ENCODE measurements at regions of chr15 and their contacts with region 1.

Region 1: DNA sequence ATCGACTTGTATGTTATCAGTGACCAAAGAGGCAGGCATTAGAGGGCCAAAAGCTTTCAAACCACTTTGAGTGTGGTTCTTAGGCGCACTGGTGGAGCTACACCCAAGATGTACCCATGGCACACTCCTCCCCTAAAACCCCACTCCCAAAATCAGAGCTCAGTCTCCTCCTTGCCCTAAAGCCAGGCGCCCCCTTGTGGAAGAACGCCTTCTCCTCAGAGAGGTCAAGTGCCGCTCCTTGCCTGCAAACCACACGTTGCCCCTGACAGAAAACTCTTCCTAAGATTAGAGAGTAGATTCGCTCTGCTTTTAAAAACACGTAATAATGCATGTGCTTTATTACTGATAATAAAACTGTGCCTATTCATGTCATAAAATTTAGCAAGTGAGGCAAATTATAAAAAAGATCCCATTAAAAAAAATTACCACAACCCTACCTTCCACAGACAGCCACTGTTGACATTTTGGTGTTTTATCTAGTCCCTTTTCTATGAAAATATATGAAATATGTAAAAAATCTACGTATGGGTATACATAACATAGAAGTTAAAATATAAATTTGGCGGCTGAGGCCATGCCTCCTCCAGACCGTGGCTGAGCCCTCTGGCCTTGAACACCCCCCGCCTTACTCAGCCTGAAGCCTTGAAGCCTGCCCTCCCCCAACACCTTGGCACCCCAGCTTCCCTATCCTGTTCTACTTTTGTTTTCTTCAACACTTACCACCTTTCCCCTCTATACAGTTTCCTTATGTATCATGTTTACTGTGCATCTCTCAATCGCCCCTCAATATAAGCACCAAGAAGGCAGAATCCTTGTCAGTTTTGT is 33.5 kb downstream of the BCL2L10 start:
- DNase-seq: no peak
- H3K4me3 ChIP-seq: no peak overlapping the region
- CTCF ChIP-seq: peak; percentile 79

Region 2: GRCh38 chr15:51861557-51862359 is 217.3 kb before region 1 on chr15:
- CTCF ChIA-PET with region 1: no interaction called
- POLR2A ChIA-PET with region 1: no interaction called
- DNase-seq: no peak
- H3K4me3 ChIP-seq: no peak overlapping the region
- CTCF ChIP-seq: no peak

Region 3: GRCh38 chr15:51971375-51972133 is 107.5 kb before region 1 on chr15 and contains the start of gene LEO1:
- CTCF ChIA-PET with region 1: interaction called, 14 read pairs
- POLR2A ChIA-PET with region 1: no interaction called
- DNase-seq: peak; percentile 93
- H3K4me3 ChIP-seq: peak within 1 kb of the TSS; percentile 91
- CTCF ChIP-seq: peak; percentile 55

Region 4: DNA sequence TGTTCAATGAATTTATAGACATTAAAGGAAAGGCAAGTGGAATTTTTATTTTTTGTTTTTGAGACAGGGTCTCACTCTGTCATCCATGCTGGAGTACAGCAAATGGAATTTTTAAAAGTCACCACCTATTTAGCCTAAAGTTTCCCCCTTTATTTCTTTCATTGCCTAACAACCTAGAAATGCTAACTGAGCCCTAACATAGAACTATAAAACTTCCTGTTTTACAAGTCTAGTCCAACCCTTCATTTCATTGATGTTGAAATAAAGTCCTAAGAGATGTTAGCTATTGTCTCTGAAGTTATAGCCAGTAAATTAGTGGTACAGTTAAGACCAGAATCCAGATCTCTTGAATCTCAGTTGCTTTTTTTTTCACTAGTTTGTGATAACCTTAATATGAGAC is 21.1 kb before region 1 on chr15:
- CTCF ChIA-PET with region 1: interaction called, 48 read pairs
- POLR2A ChIA-PET with region 1: no interaction called
- DNase-seq: no peak
- H3K4me3 ChIP-seq: no peak overlapping the region
- CTCF ChIP-seq: no peak

Region 5: DNA sequence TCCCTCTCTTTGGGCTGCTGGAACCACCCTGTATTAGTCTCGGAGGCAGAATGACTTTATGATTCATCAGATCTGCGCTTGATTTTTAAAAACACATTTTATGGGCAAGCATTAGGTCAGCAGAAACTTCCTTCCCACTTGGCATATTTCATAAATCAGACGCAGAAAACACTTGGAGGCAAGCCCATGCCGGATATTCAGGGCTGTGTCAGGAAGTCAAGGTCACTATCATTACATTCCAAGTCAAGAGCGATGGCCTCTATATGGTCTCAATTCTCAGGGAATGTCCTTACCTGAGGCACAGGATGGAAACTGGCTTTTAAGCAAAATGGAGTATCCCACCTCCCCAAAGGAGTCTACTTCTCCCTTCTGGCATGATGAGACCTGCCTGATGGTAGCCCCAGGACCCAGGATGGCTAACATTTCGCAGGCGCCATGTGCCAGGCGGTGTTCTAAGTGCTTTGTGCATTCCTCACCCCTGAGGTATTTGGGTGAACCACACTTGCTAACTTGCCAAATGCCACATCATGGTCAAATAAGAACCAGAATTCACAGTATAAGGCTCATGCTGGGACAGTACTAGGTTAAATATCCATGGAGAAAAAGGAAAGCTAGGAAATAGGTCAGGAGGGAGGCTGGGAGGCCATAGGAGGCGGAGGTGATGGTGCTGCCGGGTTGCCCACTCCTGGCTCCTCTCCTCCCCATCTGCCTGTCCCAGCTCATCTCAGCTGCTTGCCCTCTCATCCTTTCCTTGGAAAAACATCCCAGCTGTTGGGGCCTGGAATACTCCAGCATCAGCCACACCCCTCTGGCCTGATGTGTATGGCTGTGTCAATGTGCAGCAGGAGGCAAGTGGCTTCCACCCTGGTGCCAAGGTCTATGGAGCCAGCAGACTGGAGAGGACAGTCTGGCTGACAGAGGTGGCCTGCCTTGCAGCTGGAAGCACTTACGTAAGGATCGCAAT is 14.7 kb after region 1 on chr15:
- CTCF ChIA-PET with region 1: interaction called, 40 read pairs
- POLR2A ChIA-PET with region 1: interaction called, 3 read pairs
- DNase-seq: peak; percentile 76
- H3K4me3 ChIP-seq: no peak overlapping the region
- CTCF ChIP-seq: no peak

Region 6: DNA sequence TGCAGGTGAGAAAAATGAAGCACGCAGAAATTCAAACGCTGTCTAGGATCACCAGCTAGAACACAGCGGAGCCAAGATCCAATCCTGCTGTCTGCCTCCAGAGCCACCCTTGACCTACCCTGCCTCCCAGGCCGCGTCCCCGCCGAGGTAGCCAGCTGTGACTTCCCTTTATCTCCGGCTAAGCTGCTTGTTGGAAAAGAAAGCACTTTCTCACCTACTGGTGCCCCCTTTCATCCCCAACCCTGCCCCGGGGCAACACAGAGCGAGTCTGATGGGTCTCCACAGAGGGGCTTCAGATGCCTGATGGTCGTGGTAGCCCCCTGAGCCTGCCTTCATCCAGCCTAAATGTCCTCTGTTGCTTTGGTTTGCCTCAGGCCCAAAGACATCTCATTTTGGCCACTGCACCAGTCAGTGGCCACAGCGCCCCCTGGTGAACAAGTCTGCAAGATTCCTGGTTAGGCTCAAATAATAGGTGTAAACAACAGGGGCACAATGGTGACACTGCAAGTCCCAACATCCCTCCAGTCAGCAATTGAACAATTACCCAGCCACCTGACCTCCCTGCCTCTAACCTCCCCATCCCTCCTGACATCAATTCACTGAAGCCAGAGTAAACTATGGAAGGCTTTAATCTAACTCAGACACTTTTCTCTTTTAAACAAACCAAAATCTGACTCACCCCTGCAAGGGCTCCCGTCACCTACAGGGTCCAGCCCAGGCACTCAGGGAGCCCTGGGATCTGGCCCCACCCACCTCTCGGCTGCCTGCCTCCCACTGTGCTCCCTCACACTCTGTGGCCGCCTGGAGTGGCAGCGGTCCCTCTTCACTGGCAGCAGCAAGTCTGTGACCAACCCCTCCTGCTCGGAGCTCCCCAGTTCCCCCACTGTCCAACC is 60.8 kb after region 1 on chr15:
- CTCF ChIA-PET with region 1: interaction called, 11 read pairs
- POLR2A ChIA-PET with region 1: no interaction called
- DNase-seq: no peak
- H3K4me3 ChIP-seq: no peak overlapping the region
- CTCF ChIP-seq: peak; percentile 73

Measured in AG04449 (cell line).